HCT116 (cell line): ENCODE measurements at regions of chr4 and their contacts with region 1.

Region 1: DNA sequence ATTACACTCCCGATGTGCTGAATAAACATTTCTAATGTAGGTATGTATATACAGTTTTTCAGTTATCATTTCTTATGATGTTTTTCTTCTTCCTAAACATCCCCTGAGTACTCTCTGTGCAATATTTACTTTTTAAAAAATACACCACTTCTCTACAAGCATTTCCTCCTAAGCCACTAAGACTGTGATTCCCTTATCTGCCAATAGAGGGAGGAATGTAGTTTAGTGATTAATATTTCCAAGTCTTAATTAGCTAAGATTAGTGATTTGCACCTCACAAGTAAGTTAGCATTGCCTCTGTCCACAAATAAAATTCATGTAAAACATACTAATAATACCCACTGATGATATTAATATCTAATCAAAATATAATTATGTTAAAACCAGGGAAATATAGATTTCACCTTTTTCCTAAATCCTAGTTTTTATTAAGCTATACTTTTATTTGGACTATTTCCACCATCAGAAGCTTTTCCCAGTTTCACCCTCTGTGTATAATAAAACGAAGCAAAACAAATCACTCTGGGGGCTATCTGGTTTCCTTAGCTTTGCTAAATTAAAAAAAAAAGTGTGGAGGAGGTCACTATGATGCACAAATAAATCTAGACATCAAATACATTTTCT is 909.1 kb downstream of the FAT4 start:
- DNase-seq: peak; percentile 29
- ATAC-seq: no peak
- H3K4me3 ChIP-seq: no peak overlapping the region
- H3K27ac ChIP-seq: no peak overlapping the region
- H3K4me1 ChIP-seq: no peaks in the 10 kb centered on the region
- H3K27me3 ChIP-seq: no peaks in the 10 kb centered on the region
- CTCF ChIP-seq: peak; percentile 22 to 71 (median 67); a peak in 5 of 6 replicates
- POLR2A ChIP-seq: no peak
- RAD21 ChIP-seq: peak; percentile 41

Region 2: DNA sequence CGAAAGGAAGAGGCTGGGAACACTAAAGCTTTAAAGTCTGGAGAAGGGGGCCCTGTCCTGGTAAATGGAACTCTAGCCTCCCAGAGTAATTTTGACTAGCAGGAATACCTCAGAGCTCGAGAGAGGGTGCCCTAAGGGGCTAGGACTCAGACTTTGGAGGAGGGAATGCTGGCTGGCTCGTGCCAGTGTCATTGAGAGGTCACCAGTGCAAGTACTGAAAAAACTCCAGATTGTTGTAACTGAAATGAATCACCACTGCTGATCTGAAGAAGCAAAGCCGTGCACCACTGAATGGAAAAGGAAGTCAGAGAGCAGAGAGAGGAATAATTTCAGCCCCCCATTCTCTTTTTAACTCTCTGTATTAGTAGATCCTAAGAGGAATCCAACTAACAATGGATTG is 219.0 kb before region 1 on chr4:
- CTCF ChIA-PET with region 1: no interaction called
- POLR2A ChIA-PET with region 1: no interaction called
- RAD21 ChIA-PET with region 1: no interaction called
- intact Hi-C with region 1: no loop called
- DNase-seq: no peak
- ATAC-seq: no peak
- H3K4me3 ChIP-seq: no peak overlapping the region
- H3K27ac ChIP-seq: no peak overlapping the region
- H3K4me1 ChIP-seq: peaks cover 0 to 6% of the 10 kb centered on the region in 2 experiments; a peak in 2 of 4 replicates
- H3K27me3 ChIP-seq: no peaks in the 10 kb centered on the region
- CTCF ChIP-seq: no peak
- POLR2A ChIP-seq: no peak
- RAD21 ChIP-seq: no peak

Region 3: DNA sequence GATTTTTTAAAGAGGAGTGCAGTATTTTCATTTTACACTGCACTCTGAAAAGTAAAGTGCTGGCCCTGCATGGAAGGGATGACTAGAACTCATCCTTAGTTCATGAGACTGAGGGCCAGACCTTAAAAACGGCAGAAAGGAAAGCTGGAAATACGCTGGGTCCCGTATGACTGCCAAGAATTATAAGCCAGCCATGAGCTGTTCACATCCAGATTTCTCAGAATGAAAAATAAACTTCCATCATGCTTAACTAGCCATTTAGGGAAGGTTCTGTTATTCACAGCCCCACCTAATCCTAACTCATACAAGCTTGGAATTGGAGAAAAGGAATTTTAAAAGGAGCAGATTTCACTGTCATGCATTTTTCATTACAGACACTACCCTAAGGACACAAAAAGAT is 14.7 kb before region 1 on chr4:
- CTCF ChIA-PET with region 1: interaction called, 10 read pairs
- POLR2A ChIA-PET with region 1: no interaction called
- RAD21 ChIA-PET with region 1: no interaction called
- intact Hi-C with region 1: no loop called
- DNase-seq: no peak
- ATAC-seq: no peak
- H3K4me3 ChIP-seq: no peak overlapping the region
- H3K27ac ChIP-seq: no peak overlapping the region
- H3K4me1 ChIP-seq: no peaks in the 10 kb centered on the region
- H3K27me3 ChIP-seq: no peaks in the 10 kb centered on the region
- CTCF ChIP-seq: no peak
- POLR2A ChIP-seq: no peak
- RAD21 ChIP-seq: no peak

Region 4: GRCh38 chr4:126552321-126552720 is 328.4 kb after region 1 on chr4:
- CTCF ChIA-PET with region 1: no interaction called
- POLR2A ChIA-PET with region 1: no interaction called
- RAD21 ChIA-PET with region 1: no interaction called
- intact Hi-C with region 1: no loop called
- DNase-seq: no peak
- ATAC-seq: no peak
- H3K4me3 ChIP-seq: no peak overlapping the region
- H3K27ac ChIP-seq: no peak overlapping the region
- H3K4me1 ChIP-seq: no peaks in the 10 kb centered on the region
- H3K27me3 ChIP-seq: no peaks in the 10 kb centered on the region
- CTCF ChIP-seq: no peak
- POLR2A ChIP-seq: no peak
- RAD21 ChIP-seq: no peak

Region 5: GRCh38 chr4:126572264-126572663 is 348.4 kb after region 1 on chr4:
- CTCF ChIA-PET with region 1: no interaction called
- POLR2A ChIA-PET with region 1: no interaction called
- RAD21 ChIA-PET with region 1: no interaction called
- intact Hi-C with region 1: no loop called
- DNase-seq: no peak
- ATAC-seq: no peak
- H3K4me3 ChIP-seq: no peak overlapping the region
- H3K27ac ChIP-seq: no peak overlapping the region
- H3K4me1 ChIP-seq: no peaks in the 10 kb centered on the region
- H3K27me3 ChIP-seq: no peaks in the 10 kb centered on the region
- CTCF ChIP-seq: no peak
- POLR2A ChIP-seq: no peak
- RAD21 ChIP-seq: no peak

Region 6: DNA sequence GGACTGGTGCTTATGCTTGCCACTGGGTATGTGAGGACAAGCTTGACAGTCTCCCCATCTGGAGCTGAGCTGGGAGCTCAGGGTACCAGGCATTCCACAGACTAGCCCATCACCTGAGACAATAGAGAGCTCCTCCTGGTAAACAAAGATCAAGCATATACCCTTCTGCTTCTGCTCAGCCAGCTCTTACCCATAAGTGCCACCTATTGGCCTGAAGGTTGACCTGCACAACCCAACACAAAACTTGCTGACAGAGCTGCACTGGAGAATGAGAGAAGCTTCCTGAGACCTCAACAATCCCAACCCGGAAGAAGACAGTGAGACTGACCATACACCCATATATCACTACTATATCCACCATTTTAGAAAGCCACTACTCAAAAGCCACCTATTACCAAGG is 359.6 kb after region 1 on chr4:
- CTCF ChIA-PET with region 1: interaction called, 8 read pairs
- POLR2A ChIA-PET with region 1: no interaction called
- RAD21 ChIA-PET with region 1: no interaction called
- intact Hi-C with region 1: loop called (anchors 2 kb)
- DNase-seq: peak; percentile 26
- ATAC-seq: peak; percentile 90
- H3K4me3 ChIP-seq: no peak overlapping the region
- H3K27ac ChIP-seq: no peak overlapping the region
- H3K4me1 ChIP-seq: no peaks in the 10 kb centered on the region
- H3K27me3 ChIP-seq: no peaks in the 10 kb centered on the region
- CTCF ChIP-seq: peak in 2 of 3 experiments; percentile 46 to 51; a peak in 3 of 6 replicates
- POLR2A ChIP-seq: no peak
- RAD21 ChIP-seq: peak; percentile 45; the same call in 1 of the 2 replicates